Activated CD4-positive, alpha-beta memory T cell treated with anti-CD3 and anti-CD28 coated beads, Interleukin-2, amount 10 ng/mL, durations not matched to agents 7 days and 5 days (primary cell): ENCODE measurements at regions of chr22 and their contacts with region 1.

Region 1: DNA sequence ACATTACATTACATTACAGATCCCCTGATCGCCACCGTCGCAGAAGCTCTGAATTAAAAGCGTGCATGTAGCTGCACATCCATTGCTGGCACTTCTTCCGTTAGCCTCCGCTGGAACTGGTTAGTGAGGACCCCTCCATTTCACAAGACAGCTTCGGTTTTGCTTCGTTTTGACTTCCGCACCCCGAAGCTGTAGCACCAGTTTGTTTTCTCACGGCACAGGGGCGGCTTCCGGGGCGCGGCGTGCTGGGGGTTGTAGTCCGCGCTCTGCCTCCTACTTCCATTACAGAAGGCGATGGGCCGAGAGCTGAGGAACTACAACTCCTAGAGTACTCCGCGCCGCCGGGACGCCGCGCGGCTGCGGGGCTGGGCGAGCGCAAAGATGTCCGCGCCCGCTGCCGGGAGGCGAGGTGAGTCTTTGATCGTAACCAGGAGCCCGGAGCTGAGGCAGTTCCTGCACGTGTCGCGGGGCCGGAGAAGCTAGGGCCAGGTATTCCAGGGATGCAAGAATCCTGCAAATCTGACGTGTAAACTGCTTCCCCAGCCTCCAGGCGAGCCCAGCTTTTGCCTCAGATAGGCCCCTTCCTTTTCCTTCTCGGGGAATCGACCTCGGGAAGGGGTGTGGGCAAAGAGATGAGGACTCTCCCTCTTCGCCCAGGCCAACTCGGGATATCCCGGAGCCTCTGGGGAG is at the start of gene PEX26:
- DNase-seq: peak; percentile 97
- H3K4me3 Mint-ChIP-seq: peak within 1 kb of the TSS; percentile 93
- H3K27ac Mint-ChIP-seq: peak within 1 kb of the TSS; percentile 93
- H3K4me1 Mint-ChIP-seq: peaks cover 54% of the 10 kb centered on the region
- H3K27me3 Mint-ChIP-seq: no peaks in the 10 kb centered on the region
- total RNA-seq, gene PEX26: 35.5 to 35.9 TPM

Region 2: GRCh38 chr22:17785185-17786184 is 292.3 kb before region 1 on chr22:
- CTCF ChIA-PET with region 1: interaction called, 18 read pairs
- POLR2A ChIA-PET with region 1: interaction called, 3 read pairs
- DNase-seq: peak; percentile 74
- H3K4me3 Mint-ChIP-seq: no peak overlapping the region
- H3K27ac Mint-ChIP-seq: no peak overlapping the region
- H3K4me1 Mint-ChIP-seq: peaks cover 12% of the 10 kb centered on the region
- H3K27me3 Mint-ChIP-seq: no peaks in the 10 kb centered on the region

Region 3: DNA sequence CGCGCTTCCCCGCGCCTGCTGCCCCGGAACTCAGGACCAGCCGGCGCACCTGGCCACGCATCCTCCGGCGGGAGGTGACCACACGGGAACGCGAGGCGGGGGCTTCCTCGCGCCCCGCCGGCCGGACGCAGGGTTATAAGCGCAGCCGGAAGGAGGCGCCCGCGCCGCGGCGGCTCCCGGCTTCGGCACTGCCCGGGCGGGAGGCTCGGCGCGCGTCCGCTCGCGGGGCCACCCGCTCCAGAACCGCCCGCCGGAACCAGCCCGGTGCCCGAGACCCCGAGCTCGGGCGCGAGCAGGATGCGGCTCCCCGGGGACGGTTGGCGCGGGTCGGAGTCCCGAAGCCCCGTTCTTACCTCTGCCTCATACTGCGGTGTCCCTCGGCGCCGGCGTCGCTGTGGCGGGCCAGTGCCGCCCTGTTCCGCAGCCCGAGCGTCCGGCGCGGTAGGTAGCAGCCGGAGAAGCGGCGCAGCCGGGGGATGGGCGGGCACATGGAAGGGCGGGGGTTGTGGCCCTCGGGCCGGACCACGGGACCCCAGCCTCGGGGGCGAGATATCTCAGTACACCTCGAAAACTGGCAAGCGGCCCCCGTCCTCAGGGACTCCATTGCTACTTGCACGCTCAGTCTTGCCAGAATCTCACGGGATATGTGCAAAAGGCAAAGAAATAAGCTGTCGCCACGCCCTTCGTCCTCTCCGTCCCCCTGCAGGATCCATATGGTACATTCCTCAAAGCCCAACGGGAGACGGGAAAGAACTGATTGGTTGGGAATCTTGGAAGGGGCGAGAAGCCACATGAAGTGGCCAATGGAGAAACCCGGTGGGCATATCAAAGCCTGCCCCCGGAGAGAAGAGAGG is 76.5 kb before region 1 on chr22:
- CTCF ChIA-PET with region 1: interaction called, 6 read pairs
- POLR2A ChIA-PET with region 1: interaction called, 15 read pairs
- DNase-seq: peak; percentile 80
- H3K4me3 Mint-ChIP-seq: peak overlapping the region; percentile 86
- H3K27ac Mint-ChIP-seq: peak overlapping the region; percentile 82
- H3K4me1 Mint-ChIP-seq: peaks cover 55% of the 10 kb centered on the region
- H3K27me3 Mint-ChIP-seq: peaks cover 5% of the 10 kb centered on the region

Region 4: GRCh38 chr22:18035740-18036139 is 42.0 kb before region 1 on chr22:
- CTCF ChIA-PET with region 1: no interaction called
- POLR2A ChIA-PET with region 1: no interaction called
- DNase-seq: no peak
- H3K4me3 Mint-ChIP-seq: no peak overlapping the region
- H3K27ac Mint-ChIP-seq: no peak overlapping the region
- H3K4me1 Mint-ChIP-seq: no peaks in the 10 kb centered on the region
- H3K27me3 Mint-ChIP-seq: peaks cover 13% of the 10 kb centered on the region

Region 5: DNA sequence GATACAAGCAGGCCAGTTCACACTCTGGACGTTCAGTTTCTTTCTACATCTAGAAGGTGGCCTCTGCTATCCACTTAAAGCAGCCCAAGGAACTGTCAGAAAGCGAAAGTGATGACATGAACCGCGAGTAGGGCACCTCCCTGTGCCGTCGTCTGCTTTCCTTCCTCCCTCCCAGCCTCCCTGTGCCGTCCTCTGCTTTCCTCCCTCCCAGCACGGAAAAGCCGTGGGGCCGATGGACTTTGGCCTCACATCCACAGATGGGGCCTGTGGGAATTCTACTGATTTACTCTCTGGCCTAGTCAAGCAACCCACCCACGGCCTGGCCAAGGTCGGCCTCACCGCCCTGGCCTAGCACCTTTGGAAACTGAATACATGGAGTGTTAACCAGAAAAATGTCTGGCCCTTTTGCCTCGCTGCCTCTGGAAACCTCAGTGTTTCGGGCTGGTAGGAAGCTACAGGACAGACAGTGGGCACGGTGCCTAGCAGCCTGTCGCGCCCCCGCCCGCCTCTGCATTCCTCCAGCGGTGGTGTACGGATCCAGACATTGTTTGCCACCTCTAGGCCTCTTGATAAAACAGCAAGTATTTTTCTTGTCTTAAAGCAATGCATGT is 14.2 kb after region 1 on chr22:
- CTCF ChIA-PET with region 1: interaction called, 5 read pairs
- POLR2A ChIA-PET with region 1: interaction called, 72 read pairs
- DNase-seq: peak; percentile 62
- H3K4me3 Mint-ChIP-seq: peak overlapping the region; percentile 75
- H3K27ac Mint-ChIP-seq: peak overlapping the region; percentile 82
- H3K4me1 Mint-ChIP-seq: peaks cover 39% of the 10 kb centered on the region
- H3K27me3 Mint-ChIP-seq: no peaks in the 10 kb centered on the region

Region 6: GRCh38 chr22:18113680-18114394 is 36.1 kb after region 1 on chr22:
- CTCF ChIA-PET with region 1: no interaction called
- POLR2A ChIA-PET with region 1: no interaction called
- DNase-seq: no peak
- H3K4me3 Mint-ChIP-seq: no peak overlapping the region
- H3K27ac Mint-ChIP-seq: no peak overlapping the region
- H3K4me1 Mint-ChIP-seq: peaks cover 24% of the 10 kb centered on the region
- H3K27me3 Mint-ChIP-seq: peaks cover 29% of the 10 kb centered on the region